Natural killer cell (primary cell): ENCODE measurements at regions of chr6 and their contacts with region 1.

Region 1: GRCh38 chr6:141443659-141444289 is 689.0 kb upstream of the GJE1 start:
- DNase-seq: no peak
- ATAC-seq: no peak
- H3K4me3 ChIP-seq: no peak overlapping the region
- H3K4me3 Mint-ChIP-seq: no peak overlapping the region
- H3K27ac ChIP-seq: no peak overlapping the region
- H3K27ac Mint-ChIP-seq: no peak overlapping the region
- H3K4me1 ChIP-seq: no peaks in the 10 kb centered on the region
- H3K4me1 Mint-ChIP-seq: no peaks in the 10 kb centered on the region
- H3K27me3 ChIP-seq: no peaks in the 10 kb centered on the region
- H3K27me3 Mint-ChIP-seq: peaks cover 0 to 2% of the 10 kb centered on the region in 2 donors
- CTCF ChIP-seq: no peak

Region 2: DNA sequence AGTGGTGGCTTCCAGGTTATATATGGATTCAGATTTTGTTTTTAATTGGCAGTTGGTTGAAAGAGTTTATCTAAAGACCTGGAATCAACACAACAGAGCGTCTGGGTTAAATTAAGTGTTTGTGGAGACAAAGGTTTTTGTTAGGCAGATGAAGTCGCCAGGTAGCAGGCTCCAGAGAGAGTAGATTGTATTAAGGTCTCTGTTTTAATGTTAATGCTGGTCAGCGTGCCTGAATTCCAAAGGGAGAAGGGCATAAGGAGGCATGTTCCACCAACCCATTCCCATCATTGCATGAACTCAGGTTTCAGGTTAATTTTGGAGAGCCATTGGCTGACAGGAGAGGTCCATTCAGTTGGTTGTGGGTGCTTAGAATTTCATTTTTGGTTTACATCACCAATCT is 55.1 kb before region 1 on chr6:
- intact Hi-C with region 1: loop called (anchors 5 kb)
- DNase-seq: no peak
- ATAC-seq: no peak
- H3K4me3 ChIP-seq: no peak overlapping the region
- H3K4me3 Mint-ChIP-seq: no peak overlapping the region
- H3K27ac ChIP-seq: no peak overlapping the region
- H3K27ac Mint-ChIP-seq: no peak overlapping the region
- H3K4me1 ChIP-seq: no peaks in the 10 kb centered on the region
- H3K4me1 Mint-ChIP-seq: no peaks in the 10 kb centered on the region
- H3K27me3 ChIP-seq: no peaks in the 10 kb centered on the region
- H3K27me3 Mint-ChIP-seq: peaks cover 5 to 6% of the 10 kb centered on the region in 2 donors
- CTCF ChIP-seq: no peak